ENCODE measurements at regions of chr16 and their contacts with region 1.

Region 1: GRCh38 chr16:27367461-27368357 is 34.3 kb upstream of the IL21R start:
- DNase-seq: peak; percentile 32 to 56
- ATAC-seq: peak; percentile 44 to 60
- H3K4me3 ChIP-seq: peak overlapping the region; percentile 14 to 52 (median 28)
- H3K27ac ChIP-seq: peak overlapping the region in 2 of 4 donors; percentile 24 to 56
- H3K4me1 ChIP-seq: peaks cover 0 to 7% of the 10 kb centered on the region in 2 donors
- H3K27me3 ChIP-seq: no peaks in the 10 kb centered on the region
- CTCF ChIP-seq: peak; percentile 24 to 77 (median 62)
- POLR2A ChIP-seq: no peak

Region 2: DNA sequence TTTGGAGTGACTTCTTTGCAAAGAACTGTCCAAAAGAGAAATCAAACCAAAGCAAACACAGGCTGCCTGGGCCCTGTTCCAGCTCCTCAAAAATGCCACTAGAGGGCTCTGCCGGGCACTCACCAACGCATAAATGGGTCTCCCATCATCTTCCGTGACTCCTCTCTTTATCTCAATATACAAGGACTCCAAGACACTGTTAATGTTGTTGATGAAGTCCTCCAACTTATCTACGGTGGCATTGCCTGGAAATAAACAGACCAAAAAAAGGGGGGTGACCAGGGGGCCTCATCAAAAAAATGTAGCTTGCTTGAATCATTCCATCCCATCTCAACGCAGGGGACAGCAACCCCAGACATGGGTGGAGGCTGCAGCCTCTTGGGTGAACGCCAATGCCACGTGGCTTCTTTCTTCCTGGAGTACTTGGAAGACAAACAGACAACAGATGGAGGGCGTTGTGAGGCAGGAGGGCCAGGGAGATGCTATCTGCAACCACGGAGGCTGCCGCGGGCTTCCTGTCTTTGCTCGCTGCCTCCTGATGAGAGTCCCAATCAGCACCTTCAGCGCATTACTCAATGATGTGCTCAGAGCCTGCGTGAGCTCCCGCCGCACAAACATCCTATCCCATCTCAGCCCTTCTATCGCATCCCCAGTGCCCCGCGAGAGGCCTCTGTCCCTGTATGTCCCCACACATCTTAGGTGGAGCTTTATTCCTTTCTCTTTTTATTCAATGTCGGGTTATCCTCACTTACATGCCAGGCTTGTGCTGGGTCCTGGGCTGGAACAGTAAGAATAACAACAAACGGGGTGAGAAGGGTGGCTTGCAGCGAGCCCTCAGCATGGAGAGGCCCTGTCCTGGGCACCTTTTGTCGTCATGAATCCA is 132.4 kb before region 1 on chr16:
- in situ Hi-C with region 1: loop called in 2 of 4 experiments (anchors 5 to 25 kb)
- intact Hi-C with region 1: loop called (anchors 1 kb)
- DNase-seq: peak; percentile 73 to 75
- ATAC-seq: peak; percentile 72 to 81
- H3K4me3 ChIP-seq: no peak overlapping the region
- H3K27ac ChIP-seq: peak overlapping the region; percentile 52 to 64 (median 61)
- H3K4me1 ChIP-seq: peaks cover 5 to 16% of the 10 kb centered on the region in 2 donors
- H3K27me3 ChIP-seq: no peaks in the 10 kb centered on the region
- CTCF ChIP-seq: peak; percentile 37 to 77 (median 58)
- POLR2A ChIP-seq: peak in 1 of 2 donors; percentile 21